B cell (primary cell): ENCODE measurements at regions of chr14 and their contacts with region 1.

Region 1: DNA sequence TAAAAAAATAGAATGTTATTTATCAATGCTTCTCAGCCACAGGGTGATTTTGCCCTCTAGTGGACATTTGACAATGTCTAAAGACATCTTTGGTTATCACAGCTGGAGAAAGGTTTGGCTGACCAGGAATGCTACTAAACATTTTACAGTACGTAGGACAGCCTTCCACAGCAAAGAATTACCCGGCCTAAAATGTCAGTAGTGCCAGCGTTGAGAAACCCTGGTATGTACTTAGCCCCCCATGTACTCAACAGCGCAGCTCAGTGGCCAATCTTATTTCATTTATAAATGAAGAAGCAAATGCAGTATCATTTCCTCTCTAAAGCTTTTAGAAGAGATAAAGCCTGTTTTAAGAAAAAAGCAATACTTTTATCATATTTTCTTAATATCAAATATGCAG is 5.8 kb downstream of the MARK3 start:
- DNase-seq: peak; percentile 75
- ATAC-seq: peak; percentile 76
- H3K4me3 ChIP-seq: no peak overlapping the region
- H3K4me3 Mint-ChIP-seq: peak overlapping the region; percentile 16
- H3K27ac ChIP-seq: no peak overlapping the region
- H3K27ac Mint-ChIP-seq: peak overlapping the region; percentile 68
- H3K4me1 ChIP-seq: peaks cover 42 to 52% of the 10 kb centered on the region in 2 donors
- H3K4me1 Mint-ChIP-seq: peaks cover 69% of the 10 kb centered on the region
- H3K27me3 ChIP-seq: no peaks in the 10 kb centered on the region
- H3K27me3 Mint-ChIP-seq: no peaks in the 10 kb centered on the region
- CTCF ChIP-seq: peak; percentile 89

Region 2: DNA sequence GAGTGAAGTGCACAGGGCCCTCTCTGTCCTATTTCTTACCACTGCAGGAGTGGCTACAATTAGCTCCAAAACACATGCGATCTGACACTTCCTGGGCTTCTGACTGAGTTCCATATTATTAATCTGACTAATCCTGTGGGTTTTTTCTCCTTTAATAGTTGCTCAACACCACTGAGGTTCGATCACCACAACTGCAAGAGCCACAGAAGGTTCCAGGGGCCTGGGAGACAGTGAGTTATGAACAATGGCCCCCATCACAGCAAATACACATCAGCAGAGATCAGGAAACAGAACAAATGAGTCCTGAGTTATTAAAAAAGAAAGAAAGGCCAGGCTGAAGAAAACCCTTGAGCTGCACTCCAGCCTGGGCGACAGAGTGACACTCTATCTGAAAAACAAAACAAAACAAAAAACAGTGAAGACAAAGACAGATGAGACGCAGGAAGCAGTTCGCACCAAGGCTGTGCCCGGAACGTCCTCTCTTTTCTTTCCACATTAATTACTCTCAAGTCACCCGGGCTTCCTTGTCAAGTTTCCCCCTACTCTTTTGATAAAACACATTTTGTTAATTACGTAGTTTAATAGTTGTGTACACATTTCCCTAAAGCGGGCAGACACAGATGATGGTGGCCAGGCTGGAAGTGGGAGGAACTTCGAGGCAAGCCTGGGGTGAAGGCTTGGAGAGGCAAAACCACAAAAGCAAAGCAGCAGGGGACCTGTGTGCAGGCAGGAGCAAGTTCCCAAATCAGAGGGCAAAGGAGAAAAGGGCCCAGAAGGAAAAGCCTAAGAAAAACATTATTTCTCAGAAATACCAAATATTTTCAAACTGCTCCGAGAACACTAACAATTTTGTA is 376.4 kb before region 1 on chr14:
- CTCF ChIA-PET with region 1: no interaction called
- POLR2A ChIA-PET with region 1: no interaction called
- intact Hi-C with region 1: no loop called
- DNase-seq: no peak
- ATAC-seq: no peak
- H3K4me3 ChIP-seq: no peak overlapping the region
- H3K4me3 Mint-ChIP-seq: no peak overlapping the region
- H3K27ac ChIP-seq: no peak overlapping the region
- H3K27ac Mint-ChIP-seq: no peak overlapping the region
- H3K4me1 ChIP-seq: no peaks in the 10 kb centered on the region
- H3K4me1 Mint-ChIP-seq: peaks cover 15% of the 10 kb centered on the region
- H3K27me3 ChIP-seq: no peaks in the 10 kb centered on the region
- H3K27me3 Mint-ChIP-seq: no peaks in the 10 kb centered on the region
- CTCF ChIP-seq: no peak

Region 3: GRCh38 chr14:103401223-103402214 is 10.5 kb after region 1 on chr14:
- CTCF ChIA-PET with region 1: interaction called, 43 read pairs
- POLR2A ChIA-PET with region 1: interaction called, 6 read pairs
- intact Hi-C with region 1: no loop called
- DNase-seq: no peak
- ATAC-seq: peak; percentile 31
- H3K4me3 ChIP-seq: no peak overlapping the region
- H3K4me3 Mint-ChIP-seq: peak overlapping the region; percentile 32
- H3K27ac ChIP-seq: peak overlapping the region in 1 of 2 donors; percentile 5
- H3K27ac Mint-ChIP-seq: no peak overlapping the region
- H3K4me1 ChIP-seq: peaks cover 23 to 29% of the 10 kb centered on the region in 2 donors
- H3K4me1 Mint-ChIP-seq: peaks cover 54% of the 10 kb centered on the region
- H3K27me3 ChIP-seq: no peaks in the 10 kb centered on the region
- H3K27me3 Mint-ChIP-seq: no peaks in the 10 kb centered on the region
- CTCF ChIP-seq: no peak

Region 4: DNA sequence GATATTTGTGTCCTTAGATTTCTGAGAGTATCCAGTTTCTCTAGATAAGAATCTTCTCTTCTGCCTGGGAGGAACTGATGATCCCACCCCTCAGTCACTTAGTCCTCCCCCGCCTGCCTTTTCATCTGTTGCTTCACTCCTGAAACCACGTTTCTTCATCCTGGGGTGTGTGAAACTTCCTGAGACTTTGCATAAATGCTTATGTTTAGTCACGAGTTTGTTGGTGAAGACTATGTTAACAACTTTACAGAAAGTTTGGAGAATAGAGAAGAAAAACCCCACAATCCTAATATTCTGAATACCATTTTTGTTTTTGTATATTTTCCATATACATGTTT is 27.4 kb after region 1 on chr14:
- CTCF ChIA-PET with region 1: interaction called, 10 read pairs
- POLR2A ChIA-PET with region 1: no interaction called
- intact Hi-C with region 1: no loop called
- DNase-seq: no peak
- ATAC-seq: no peak
- H3K4me3 ChIP-seq: no peak overlapping the region
- H3K4me3 Mint-ChIP-seq: no peak overlapping the region
- H3K27ac ChIP-seq: no peak overlapping the region
- H3K27ac Mint-ChIP-seq: no peak overlapping the region
- H3K4me1 ChIP-seq: peaks cover 0 to 4% of the 10 kb centered on the region in 2 donors
- H3K4me1 Mint-ChIP-seq: peaks cover 24% of the 10 kb centered on the region
- H3K27me3 ChIP-seq: no peaks in the 10 kb centered on the region
- H3K27me3 Mint-ChIP-seq: no peaks in the 10 kb centered on the region
- CTCF ChIP-seq: no peak